Sigmoid colon (tissue), 7 donors: ENCODE measurements at regions of chr2 and their contacts with region 1.

Region 1: DNA sequence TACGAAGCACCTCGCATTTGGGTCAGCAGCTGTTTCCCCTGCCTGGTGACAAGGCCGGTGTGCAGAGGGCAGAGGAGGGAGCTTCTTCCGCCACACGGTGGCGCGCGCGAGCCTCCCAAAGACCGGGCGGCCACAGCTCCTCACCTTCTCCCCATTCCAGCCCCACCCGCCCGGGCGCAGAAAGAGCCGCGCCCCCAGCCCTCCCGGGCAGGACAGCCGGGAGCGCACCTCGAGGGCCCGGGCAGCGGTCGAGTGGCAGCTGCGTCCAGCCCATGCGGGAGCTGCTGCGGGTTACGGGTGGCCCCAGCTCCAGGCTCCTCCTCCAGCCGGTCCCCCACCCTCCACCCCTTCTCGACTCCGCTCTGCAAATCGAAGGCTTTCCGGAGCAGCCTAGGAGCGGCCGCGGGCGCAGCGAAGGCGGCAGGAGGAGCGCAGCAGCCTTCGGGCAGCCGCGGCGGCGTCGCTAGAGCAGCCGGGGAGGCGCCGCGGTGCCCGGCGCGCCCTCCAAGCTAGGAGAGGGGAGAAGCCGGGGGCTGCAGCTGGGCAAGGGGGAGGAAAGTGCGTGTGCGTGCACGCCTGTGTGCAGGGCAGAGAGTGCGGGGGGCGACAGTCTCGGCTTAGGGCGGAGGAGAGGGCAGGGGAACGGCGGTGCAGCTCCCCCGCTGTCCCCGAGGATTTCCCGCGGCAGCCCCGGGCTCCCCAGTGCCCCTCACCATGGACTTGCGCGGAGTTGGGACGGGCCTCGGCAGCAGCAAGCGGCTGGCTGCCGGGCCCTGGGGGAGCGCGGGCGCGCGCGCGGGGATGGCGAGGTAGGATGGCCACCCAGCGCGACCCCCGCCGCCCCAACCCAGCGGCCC is at the start of gene CCDC85A:
- DNase-seq: peak; percentile 83
- H3K4me3 ChIP-seq: peak within 1 kb of the TSS; percentile 27 to 64 (median 55)
- H3K27ac ChIP-seq: peak within 1 kb of the TSS in 3 of 4 donors; percentile 17 to 49 (median 36)
- H3K4me1 ChIP-seq: peaks cover 0 to 28% (median 20%) of the 10 kb centered on the region in 4 donors
- H3K27me3 ChIP-seq: peaks cover 10 to 79% (median 35%) of the 10 kb centered on the region in 3 donors
- CTCF ChIP-seq: peak; percentile 40 to 91 (median 66)
- EP300 ChIP-seq: no peak
- POLR2A ChIP-seq: no peak
- total RNA-seq, gene CCDC85A: 1.9 to 8.2 (median 3.5) TPM

Region 2: GRCh38 chr2:56288838-56289580 is 105.1 kb after region 1 on chr2:
- intact Hi-C with region 1: no loop called
- DNase-seq: no peak
- H3K4me3 ChIP-seq: no peak overlapping the region
- H3K27ac ChIP-seq: no peak overlapping the region
- H3K4me1 ChIP-seq: no peaks in the 10 kb centered on the region
- H3K27me3 ChIP-seq: no peaks in the 10 kb centered on the region
- CTCF ChIP-seq: no peak
- EP300 ChIP-seq: no peak
- POLR2A ChIP-seq: no peak

Region 3: GRCh38 chr2:56540916-56541315 is 357.0 kb after region 1 on chr2:
- intact Hi-C with region 1: no loop called
- DNase-seq: no peak
- H3K4me3 ChIP-seq: no peak overlapping the region
- H3K27ac ChIP-seq: no peak overlapping the region
- H3K4me1 ChIP-seq: no peaks in the 10 kb centered on the region
- H3K27me3 ChIP-seq: no peaks in the 10 kb centered on the region
- CTCF ChIP-seq: no peak
- EP300 ChIP-seq: no peak
- POLR2A ChIP-seq: no peak

Region 4: DNA sequence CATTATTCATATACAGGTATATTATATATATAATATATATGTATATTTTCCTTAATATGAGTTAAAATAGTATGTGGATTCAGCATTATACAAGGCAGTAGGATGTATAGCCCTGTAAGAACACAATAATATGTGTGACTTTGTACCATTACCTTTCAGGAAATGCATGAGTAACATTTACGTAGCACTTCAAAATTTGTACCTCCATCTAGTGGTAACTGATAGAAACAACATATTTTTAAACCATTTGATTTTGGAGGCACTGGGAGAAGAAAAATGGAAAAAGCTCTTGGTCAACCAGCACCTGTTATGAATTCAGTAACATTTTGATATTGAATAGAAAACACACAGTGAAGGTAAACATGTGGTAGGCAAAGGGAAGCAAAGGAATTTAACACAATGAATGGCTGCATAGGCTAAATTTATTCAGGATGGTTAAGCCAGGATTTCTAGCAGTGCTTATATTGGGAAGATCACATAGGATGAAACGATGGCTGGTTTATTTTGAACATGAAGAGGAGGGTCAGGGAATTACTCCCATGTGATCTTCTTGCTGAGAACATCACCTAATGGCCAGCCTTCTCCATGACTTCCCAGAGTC is 565.4 kb after region 1 on chr2:
- intact Hi-C with region 1: loop called (anchors 5 kb)
- DNase-seq: no peak
- H3K4me3 ChIP-seq: no peak overlapping the region
- H3K27ac ChIP-seq: no peak overlapping the region
- H3K4me1 ChIP-seq: no peaks in the 10 kb centered on the region
- H3K27me3 ChIP-seq: no peaks in the 10 kb centered on the region
- CTCF ChIP-seq: peak in 1 of 4 experiments; percentile 21
- EP300 ChIP-seq: no peak
- POLR2A ChIP-seq: no peak

Region 5: GRCh38 chr2:57516698-57517340 is 1332.9 kb after region 1 on chr2:
- intact Hi-C with region 1: loop called (anchors 5 kb)
- DNase-seq: no peak
- H3K4me3 ChIP-seq: no peak overlapping the region
- H3K27ac ChIP-seq: no peak overlapping the region
- H3K4me1 ChIP-seq: no peaks in the 10 kb centered on the region
- H3K27me3 ChIP-seq: no peaks in the 10 kb centered on the region
- CTCF ChIP-seq: peak in 3 of 4 experiments; percentile 33 to 50 (median 37)
- EP300 ChIP-seq: no peak
- POLR2A ChIP-seq: no peak